Activated B cell treated with CpG ODN at 0.5 μM for 24 hours (primary cell): ENCODE measurements at regions of chr2 and their contacts with region 1.

Region 1: GRCh38 chr2:171404261-171404660 is 29.5 kb downstream of the METTL8 start:
- DNase-seq: no peak
- ATAC-seq: no peak
- H3K4me3 Mint-ChIP-seq: no peak overlapping the region
- H3K27ac Mint-ChIP-seq: no peak overlapping the region
- H3K4me1 Mint-ChIP-seq: peaks cover 44% of the 10 kb centered on the region
- H3K27me3 Mint-ChIP-seq: no peaks in the 10 kb centered on the region
- CTCF ChIP-seq: no peak

Region 2: DNA sequence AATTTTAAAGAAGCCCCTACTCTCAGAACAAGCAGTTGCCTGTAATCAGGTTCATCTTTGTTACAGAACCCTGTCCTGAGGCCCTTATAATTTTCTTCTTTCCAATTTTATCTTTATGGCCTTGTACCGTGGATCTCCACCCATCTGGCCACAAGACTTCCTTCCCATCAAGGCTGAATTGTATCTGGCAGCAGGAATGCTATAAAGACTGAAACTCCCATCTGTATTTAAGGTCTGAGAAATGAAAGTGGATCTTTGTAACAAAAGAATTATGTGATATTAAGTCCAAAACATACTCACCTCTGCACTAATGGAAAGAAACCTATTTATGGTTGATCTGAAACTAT is 62.2 kb before region 1 on chr2:
- CTCF ChIA-PET with region 1: no interaction called
- POLR2A ChIA-PET with region 1: interaction called, 13 read pairs
- intact Hi-C with region 1: loop called (anchors 2 kb)
- DNase-seq: no peak
- ATAC-seq: no peak
- H3K4me3 Mint-ChIP-seq: no peak overlapping the region
- H3K27ac Mint-ChIP-seq: peak overlapping the region; percentile 76
- H3K4me1 Mint-ChIP-seq: peaks cover 33% of the 10 kb centered on the region
- H3K27me3 Mint-ChIP-seq: no peaks in the 10 kb centered on the region
- CTCF ChIP-seq: no peak